ENCODE measurements at regions of chr6 and their contacts with region 1.

Region 1: DNA sequence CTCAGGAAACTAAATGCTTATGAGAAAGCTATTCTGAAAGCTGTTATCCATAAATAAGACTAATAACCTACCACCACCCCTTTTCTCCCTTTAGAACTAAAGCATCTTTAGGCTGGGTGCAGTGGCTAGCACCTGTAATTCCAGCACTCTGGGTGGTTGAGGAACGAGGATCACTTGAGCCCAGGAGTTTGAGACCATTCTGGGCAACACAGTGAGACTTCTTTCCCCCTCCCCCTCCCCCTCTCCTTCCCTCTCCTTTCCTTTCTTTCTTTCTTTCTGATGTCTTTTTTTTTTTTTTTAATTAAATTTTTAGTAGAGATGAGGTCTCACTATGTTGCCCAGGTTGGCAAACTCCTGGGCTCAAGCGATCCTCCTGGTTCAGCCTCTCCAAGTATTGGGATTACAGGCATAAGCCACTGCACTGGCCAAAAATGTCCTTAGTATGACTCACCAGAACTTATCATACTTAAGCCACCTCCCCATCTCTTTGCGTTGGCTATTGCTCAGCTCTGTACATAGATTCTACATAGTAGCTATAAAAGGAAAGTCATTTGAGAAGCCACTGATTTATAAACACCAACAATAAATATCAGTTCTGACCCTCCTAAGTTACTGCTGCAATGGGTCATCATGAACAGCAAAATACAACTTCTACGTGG is 54.8 kb upstream of the SPDEF start:
- DNase-seq: peak; percentile 94
- ATAC-seq: peak; percentile 93
- H3K4me3 ChIP-seq: peak overlapping the region; percentile 6; the same call in 1 of the 2 replicates
- H3K27ac ChIP-seq: peak overlapping the region; percentile 31
- H3K4me1 ChIP-seq: peaks cover 17% of the 10 kb centered on the region
- H3K27me3 ChIP-seq: no peaks in the 10 kb centered on the region
- CTCF ChIP-seq: no peak

Region 2: GRCh38 chr6:33566182-33567084 is 1044.5 kb before region 1 on chr6:
- CTCF ChIA-PET with region 1: no interaction called
- POLR2A ChIA-PET with region 1: interaction called, 15 read pairs
- intact Hi-C with region 1: no loop called
- DNase-seq: peak; percentile 61
- ATAC-seq: peak; percentile 23
- H3K4me3 ChIP-seq: no peak overlapping the region
- H3K27ac ChIP-seq: peak overlapping the region; percentile 27
- H3K4me1 ChIP-seq: peaks cover 21% of the 10 kb centered on the region
- H3K27me3 ChIP-seq: no peaks in the 10 kb centered on the region
- CTCF ChIP-seq: no peak

Region 3: GRCh38 chr6:34508425-34508824 is 102.5 kb before region 1 on chr6:
- CTCF ChIA-PET with region 1: no interaction called
- POLR2A ChIA-PET with region 1: no interaction called
- intact Hi-C with region 1: no loop called
- DNase-seq: no peak
- ATAC-seq: no peak
- H3K4me3 ChIP-seq: no peak overlapping the region
- H3K27ac ChIP-seq: no peak overlapping the region
- H3K4me1 ChIP-seq: no peaks in the 10 kb centered on the region
- H3K27me3 ChIP-seq: no peaks in the 10 kb centered on the region
- CTCF ChIP-seq: 0 out of 2 replicates have a peak, but pooled peaks have one; percentile 20

Region 4: DNA sequence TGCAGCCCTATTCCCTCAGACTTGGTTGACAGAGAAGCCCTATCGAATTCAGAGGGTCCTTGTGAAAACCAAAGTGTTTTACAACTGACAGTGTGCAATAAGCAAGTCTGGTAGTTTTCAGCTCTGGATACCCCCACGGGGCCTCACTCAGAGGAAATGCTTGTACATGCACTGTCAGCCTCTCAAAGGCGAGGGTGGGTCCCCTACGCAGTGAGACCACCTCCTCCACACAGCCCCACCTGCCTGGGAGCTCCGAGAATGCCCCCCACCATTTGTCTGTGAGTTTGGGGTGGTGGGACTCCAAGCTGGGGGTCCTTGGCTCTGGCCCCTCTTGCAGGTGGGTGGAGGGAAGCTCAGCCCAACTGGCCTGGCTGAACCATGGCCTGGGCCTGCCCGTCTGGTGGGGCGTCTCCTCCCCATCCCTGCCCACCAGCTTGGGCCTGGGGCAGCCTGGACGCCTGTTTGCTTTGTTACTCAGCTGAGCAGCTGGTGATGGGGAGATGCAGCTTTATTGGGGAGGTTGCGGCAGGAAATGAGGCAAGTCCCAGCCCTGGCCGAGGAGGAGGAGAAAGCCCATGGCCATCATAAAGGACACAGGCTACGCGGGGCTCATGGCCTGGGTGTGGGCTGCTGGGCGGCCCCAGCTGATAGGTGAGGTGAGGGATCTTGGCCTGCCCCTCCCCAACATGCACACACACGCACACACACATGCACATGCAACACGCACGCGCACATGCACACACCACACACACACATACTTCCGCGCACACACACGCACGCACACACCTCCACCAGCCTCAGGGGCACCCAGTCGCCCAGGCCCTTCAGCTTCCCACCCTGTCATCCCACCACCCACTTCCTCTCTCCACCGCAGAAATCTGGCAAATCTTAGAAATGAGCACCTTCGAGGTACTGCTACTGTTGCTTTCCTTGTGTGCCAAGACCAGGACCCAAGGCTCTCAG is 56.3 kb before region 1 on chr6:
- CTCF ChIA-PET with region 1: no interaction called
- POLR2A ChIA-PET with region 1: interaction called, 5 read pairs
- intact Hi-C with region 1: loop called (anchors 2 kb)
- DNase-seq: peak; percentile 80
- ATAC-seq: peak; percentile 58
- H3K4me3 ChIP-seq: peak overlapping the region; percentile 73
- H3K27ac ChIP-seq: peak overlapping the region; percentile 65
- H3K4me1 ChIP-seq: peaks cover 43% of the 10 kb centered on the region
- H3K27me3 ChIP-seq: no peaks in the 10 kb centered on the region
- CTCF ChIP-seq: no peak

Region 5: GRCh38 chr6:34656378-34657036 is 45.6 kb after region 1 on chr6:
- CTCF ChIA-PET with region 1: interaction called, 3 read pairs
- POLR2A ChIA-PET with region 1: no interaction called
- intact Hi-C with region 1: loop called (anchors 2 kb)
- DNase-seq: peak; percentile 72
- ATAC-seq: peak; percentile 35
- H3K4me3 ChIP-seq: peak overlapping the region; percentile 65
- H3K27ac ChIP-seq: peak overlapping the region; percentile 98
- H3K4me1 ChIP-seq: peaks cover 46% of the 10 kb centered on the region
- H3K27me3 ChIP-seq: no peaks in the 10 kb centered on the region
- CTCF ChIP-seq: no peak

Region 6: DNA sequence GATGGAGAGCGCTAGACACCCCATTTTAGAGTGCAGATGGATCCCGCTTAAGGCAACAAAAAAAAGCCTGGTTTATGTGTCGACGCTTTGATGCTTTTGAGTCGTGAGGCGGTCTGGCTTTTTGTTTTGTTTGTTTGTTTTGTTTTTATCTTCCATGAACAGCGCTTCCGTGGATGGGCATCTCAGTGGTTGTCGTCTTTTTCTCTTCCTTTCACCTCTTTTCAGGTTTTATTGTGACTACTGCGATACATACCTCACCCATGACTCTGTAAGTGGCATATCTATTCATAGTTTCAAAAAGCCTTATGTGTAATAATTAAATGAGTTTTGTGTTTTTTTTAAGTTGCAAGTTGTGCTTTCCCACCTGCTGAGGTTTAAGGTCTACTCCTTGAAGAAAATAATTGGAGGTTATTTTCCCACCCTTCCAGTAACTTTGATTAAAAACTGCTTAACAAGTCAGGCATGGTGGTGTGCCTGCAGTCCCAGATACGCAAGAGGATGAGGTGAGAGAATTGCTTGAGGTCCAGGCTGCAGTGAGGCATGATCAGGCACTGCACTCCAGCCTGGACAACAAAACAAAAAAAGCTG is 146.8 kb after region 1 on chr6:
- CTCF ChIA-PET with region 1: no interaction called
- POLR2A ChIA-PET with region 1: no interaction called
- intact Hi-C with region 1: loop called (anchors 1 kb)
- DNase-seq: no peak
- ATAC-seq: no peak
- H3K4me3 ChIP-seq: peak overlapping the region; percentile 82
- H3K27ac ChIP-seq: peak overlapping the region; percentile 88
- H3K4me1 ChIP-seq: no peaks in the 10 kb centered on the region
- H3K27me3 ChIP-seq: no peaks in the 10 kb centered on the region
- CTCF ChIP-seq: no peak

Region 7: DNA sequence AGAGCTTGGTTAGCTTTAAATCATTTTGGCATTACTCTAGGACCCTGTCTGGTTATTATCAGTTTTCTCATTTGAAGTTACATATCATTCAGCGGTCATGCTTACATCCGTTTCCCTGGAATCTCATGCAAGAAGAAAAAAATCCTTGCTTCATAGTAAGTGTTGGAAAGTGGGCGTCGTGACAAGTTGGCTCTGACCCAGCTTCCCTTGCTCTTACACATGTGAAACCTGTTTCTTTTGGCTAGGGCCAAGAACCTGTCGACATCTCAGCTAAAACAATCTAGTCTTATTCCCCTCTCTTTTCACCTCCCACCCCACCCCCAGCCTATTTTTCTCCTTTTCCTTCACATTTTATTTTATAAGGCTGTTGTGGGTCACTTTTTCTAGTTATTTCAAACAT is 323.6 kb after region 1 on chr6:
- CTCF ChIA-PET with region 1: no interaction called
- POLR2A ChIA-PET with region 1: no interaction called
- intact Hi-C with region 1: no loop called
- DNase-seq: peak; percentile 33
- ATAC-seq: no peak
- H3K4me3 ChIP-seq: no peak overlapping the region
- H3K27ac ChIP-seq: no peak overlapping the region
- H3K4me1 ChIP-seq: no peaks in the 10 kb centered on the region
- H3K27me3 ChIP-seq: no peaks in the 10 kb centered on the region
- CTCF ChIP-seq: no peak

Measured in PC-3 (cell line).